ENCODE measurements at regions of chr5 and their contacts with region 1.

Region 1: GRCh38 chr5:90434116-90434714 is 24.7 kb upstream of the CETN3 start:
- DNase-seq: peak; percentile 41
- H3K4me3 ChIP-seq: no peak overlapping the region
- H3K27ac ChIP-seq: no peak overlapping the region
- H3K4me1 ChIP-seq: no peaks in the 10 kb centered on the region
- H3K27me3 ChIP-seq: peaks cover 8 to 9% of the 10 kb centered on the region in 2 experiments
- CTCF ChIP-seq: peak; percentile 54 to 64
- POLR2A ChIP-seq: no peak

Region 2: DNA sequence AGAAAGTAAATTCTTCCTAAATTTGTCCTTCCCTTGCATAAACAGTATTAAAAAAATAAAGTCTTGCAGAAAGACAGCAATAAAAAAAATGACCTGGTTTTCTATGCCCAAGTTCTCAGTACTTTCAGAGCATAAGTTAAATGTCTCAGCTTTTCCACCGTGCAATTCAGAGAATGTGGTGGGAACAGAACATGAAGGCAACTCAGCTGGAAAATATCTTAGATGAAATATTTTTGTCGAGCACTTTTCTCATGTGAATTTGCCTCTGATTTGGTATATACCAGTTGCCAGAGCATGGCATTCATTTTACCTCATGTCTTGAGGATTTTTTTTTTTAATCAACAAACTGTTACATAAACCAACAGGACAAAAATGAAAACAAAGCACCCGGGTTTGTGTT is 200.7 kb before region 1 on chr5:
- CTCF ChIA-PET with region 1: no interaction called
- POLR2A ChIA-PET with region 1: no interaction called
- dilution Hi-C with region 1: no loop called
- intact Hi-C with region 1: no loop called
- DNase-seq: no peak
- H3K4me3 ChIP-seq: no peak overlapping the region
- H3K27ac ChIP-seq: no peak overlapping the region
- H3K4me1 ChIP-seq: no peaks in the 10 kb centered on the region
- H3K27me3 ChIP-seq: peaks cover 0 to 7% of the 10 kb centered on the region in 2 experiments
- CTCF ChIP-seq: no peak
- POLR2A ChIP-seq: no peak

Region 3: GRCh38 chr5:90398726-90399125 is 35.5 kb before region 1 on chr5:
- CTCF ChIA-PET with region 1: no interaction called
- POLR2A ChIA-PET with region 1: no interaction called
- dilution Hi-C with region 1: no loop called
- intact Hi-C with region 1: no loop called
- DNase-seq: no peak
- H3K4me3 ChIP-seq: no peak overlapping the region
- H3K27ac ChIP-seq: no peak overlapping the region
- H3K4me1 ChIP-seq: no peaks in the 10 kb centered on the region
- H3K27me3 ChIP-seq: no peaks in the 10 kb centered on the region
- CTCF ChIP-seq: no peak
- POLR2A ChIP-seq: no peak

Region 4: GRCh38 chr5:90421136-90421535 is 13.1 kb before region 1 on chr5:
- CTCF ChIA-PET with region 1: interaction called, 15 read pairs
- POLR2A ChIA-PET with region 1: no interaction called
- dilution Hi-C with region 1: no loop called
- intact Hi-C with region 1: no loop called
- DNase-seq: peak; percentile 7
- H3K4me3 ChIP-seq: no peak overlapping the region
- H3K27ac ChIP-seq: no peak overlapping the region
- H3K4me1 ChIP-seq: no peaks in the 10 kb centered on the region
- H3K27me3 ChIP-seq: peaks cover 6 to 12% of the 10 kb centered on the region in 2 experiments
- CTCF ChIP-seq: peak in 1 of 2 donors; percentile 17
- POLR2A ChIP-seq: no peak

Region 5: GRCh38 chr5:90446961-90447360 is 12.7 kb after region 1 on chr5:
- CTCF ChIA-PET with region 1: interaction called, 10 read pairs
- POLR2A ChIA-PET with region 1: no interaction called
- dilution Hi-C with region 1: no loop called
- intact Hi-C with region 1: no loop called
- DNase-seq: no peak
- H3K4me3 ChIP-seq: no peak overlapping the region
- H3K27ac ChIP-seq: no peak overlapping the region
- H3K4me1 ChIP-seq: no peaks in the 10 kb centered on the region
- H3K27me3 ChIP-seq: no peaks in the 10 kb centered on the region
- CTCF ChIP-seq: no peak
- POLR2A ChIP-seq: no peak

Region 6: GRCh38 chr5:90474235-90475109 is 40.3 kb after region 1 on chr5 and contains the starts of genes MBLAC2 and POLR3G:
- CTCF ChIA-PET with region 1: interaction called, 8 read pairs
- POLR2A ChIA-PET with region 1: no interaction called
- dilution Hi-C with region 1: no loop called
- intact Hi-C with region 1: loop called (anchors 2 kb)
- DNase-seq: peak; percentile 94
- H3K4me3 ChIP-seq: peak within 1 kb of the TSS; percentile 48 to 88 (median 64)
- H3K27ac ChIP-seq: no peak within 1 kb of the TSS
- H3K4me1 ChIP-seq: peaks cover 15% of the 10 kb centered on the region
- H3K27me3 ChIP-seq: no peaks in the 10 kb centered on the region
- CTCF ChIP-seq: peak; percentile 25 to 66
- POLR2A ChIP-seq: peak; percentile 82
- total RNA-seq, gene MBLAC2: 4.8 and 5.3 TPM in 2 replicates
- total RNA-seq, gene POLR3G: 15.0 and 16.7 TPM in 2 replicates

Region 7: GRCh38 chr5:90606539-90606938 is 172.3 kb after region 1 on chr5:
- CTCF ChIA-PET with region 1: interaction called, 90 read pairs
- POLR2A ChIA-PET with region 1: no interaction called
- dilution Hi-C with region 1: no loop called
- intact Hi-C with region 1: no loop called
- DNase-seq: no peak
- H3K4me3 ChIP-seq: no peak overlapping the region
- H3K27ac ChIP-seq: no peak overlapping the region
- H3K4me1 ChIP-seq: no peaks in the 10 kb centered on the region
- H3K27me3 ChIP-seq: no peaks in the 10 kb centered on the region
- CTCF ChIP-seq: no peak
- POLR2A ChIP-seq: no peak

Region 8: GRCh38 chr5:90709323-90710155 is 275.3 kb after region 1 on chr5:
- CTCF ChIA-PET with region 1: no interaction called
- POLR2A ChIA-PET with region 1: no interaction called
- dilution Hi-C with region 1: no loop called
- intact Hi-C with region 1: loop called (anchors 2 kb)
- DNase-seq: peak; percentile 46
- H3K4me3 ChIP-seq: no peak overlapping the region
- H3K27ac ChIP-seq: no peak overlapping the region
- H3K4me1 ChIP-seq: no peaks in the 10 kb centered on the region
- H3K27me3 ChIP-seq: peaks cover 0 to 4% of the 10 kb centered on the region in 2 experiments
- CTCF ChIP-seq: peak; percentile 61 to 66
- POLR2A ChIP-seq: no peak

Region 9: DNA sequence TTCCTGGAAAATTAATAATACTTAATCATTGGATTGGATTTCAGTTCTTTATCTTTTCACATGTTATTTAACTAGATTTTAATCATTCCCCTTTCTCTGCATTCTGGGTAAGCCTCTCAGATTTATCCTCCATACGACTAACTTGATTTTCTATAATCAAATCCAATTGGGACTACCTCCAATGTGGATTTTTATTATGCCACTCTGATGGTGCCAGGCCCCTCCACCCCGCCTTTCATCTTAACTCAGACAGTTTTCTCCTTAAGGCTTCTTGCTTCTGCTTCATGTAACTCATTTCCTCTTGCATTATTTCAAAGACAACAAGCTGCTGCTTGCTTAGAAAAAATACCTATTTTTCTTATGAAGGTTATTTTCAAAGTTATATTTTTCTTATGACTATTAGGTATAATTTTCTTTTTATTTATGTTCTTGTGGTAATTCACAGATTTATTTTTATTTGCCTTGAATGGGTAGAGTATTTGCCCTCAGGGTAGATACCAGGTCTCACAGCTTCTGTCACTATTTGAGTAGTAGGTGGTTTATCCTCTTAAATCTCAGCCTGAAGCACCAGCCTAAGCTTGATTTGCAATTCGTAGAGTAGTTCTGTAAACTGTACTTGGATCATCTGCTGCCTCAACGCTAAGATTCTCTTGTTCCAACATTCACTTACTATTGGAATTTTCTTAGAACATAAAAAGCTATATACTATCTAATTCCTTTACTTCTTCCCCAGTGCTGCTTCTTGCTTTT is 1607.9 kb after region 1 on chr5:
- CTCF ChIA-PET with region 1: no interaction called
- POLR2A ChIA-PET with region 1: no interaction called
- dilution Hi-C with region 1: no loop called
- intact Hi-C with region 1: no loop called
- DNase-seq: no peak
- H3K4me3 ChIP-seq: no peak overlapping the region
- H3K27ac ChIP-seq: no peak overlapping the region
- H3K4me1 ChIP-seq: no peaks in the 10 kb centered on the region
- H3K27me3 ChIP-seq: no peaks in the 10 kb centered on the region
- CTCF ChIP-seq: no peak
- POLR2A ChIP-seq: no peak

Measured in endothelial cell of umbilical vein (primary cell).